ENCODE measurements at regions of chr2 and their contacts with region 1.

Region 1: DNA sequence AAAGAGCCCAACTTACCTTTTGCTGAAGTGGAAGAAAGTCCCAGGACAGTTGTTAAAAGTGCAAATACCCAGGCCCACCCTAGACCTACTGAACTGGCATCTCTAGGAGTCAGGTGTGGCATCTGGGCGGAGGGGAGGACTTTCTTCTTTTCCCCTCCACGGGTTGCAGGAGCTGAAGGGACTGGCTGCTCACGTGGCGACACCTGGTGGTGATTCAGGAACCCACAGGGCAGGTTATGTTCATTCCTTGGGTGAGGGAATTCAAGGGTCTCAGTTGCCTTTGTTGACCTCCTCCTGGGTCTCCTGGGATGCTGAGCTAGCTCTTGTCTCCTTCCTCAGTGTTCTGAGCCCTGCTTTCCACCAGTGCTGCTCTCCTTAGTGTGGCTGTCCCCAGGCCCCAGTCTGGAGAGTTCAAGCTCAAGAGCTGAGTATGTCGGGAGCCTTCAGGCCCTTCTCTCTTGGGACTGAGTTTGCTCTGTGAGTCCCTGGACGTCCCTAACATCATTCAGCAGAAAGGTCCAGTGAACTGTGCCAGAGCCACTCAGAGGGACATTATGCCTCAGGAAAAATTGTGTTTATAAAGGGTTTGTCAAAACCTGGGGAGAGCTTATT is 56.9 kb downstream of the DYSF start:
- DNase-seq: peak; percentile 72 to 78
- H3K4me3 ChIP-seq: no peak overlapping the region
- H3K27ac ChIP-seq: no peak overlapping the region
- H3K4me1 ChIP-seq: peaks cover 0 to 5% of the 10 kb centered on the region in 2 donors
- H3K27me3 ChIP-seq: no peaks in the 10 kb centered on the region
- CTCF ChIP-seq: peak; percentile 81 to 92 (median 84)
- POLR2A ChIP-seq: no peak

Region 2: DNA sequence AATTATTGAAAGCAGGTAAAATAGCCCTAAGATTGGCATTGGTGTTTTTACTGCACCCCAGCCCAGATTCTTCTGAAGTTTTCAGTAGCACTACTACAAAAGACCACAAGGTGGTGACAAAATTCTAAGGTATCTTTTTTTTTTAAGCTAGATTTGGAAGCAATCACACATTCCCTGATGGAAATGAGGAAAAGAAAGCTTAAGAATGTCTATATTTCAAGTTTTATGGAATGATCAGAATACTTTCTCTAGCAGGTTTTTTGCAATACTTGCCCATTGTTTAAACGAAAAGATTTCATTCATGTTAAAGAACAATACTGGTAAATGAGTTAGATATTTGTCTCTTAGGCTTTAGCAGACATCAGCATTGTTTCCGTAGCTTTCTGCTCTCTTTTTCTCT is 210.8 kb before region 1 on chr2:
- intact Hi-C with region 1: loop called (anchors 2 kb)
- DNase-seq: no peak
- H3K4me3 ChIP-seq: no peak overlapping the region
- H3K27ac ChIP-seq: no peak overlapping the region
- H3K4me1 ChIP-seq: no peaks in the 10 kb centered on the region
- H3K27me3 ChIP-seq: no peaks in the 10 kb centered on the region
- CTCF ChIP-seq: peak; percentile 45 to 73 (median 62)
- POLR2A ChIP-seq: no peak

Region 3: GRCh38 chr2:71463342-71463654 is 47.0 kb before region 1 on chr2:
- intact Hi-C with region 1: loop called (anchors 2 kb)
- DNase-seq: no peak
- H3K4me3 ChIP-seq: no peak overlapping the region
- H3K27ac ChIP-seq: no peak overlapping the region
- H3K4me1 ChIP-seq: peaks cover 3 to 12% of the 10 kb centered on the region in 2 donors
- H3K27me3 ChIP-seq: no peaks in the 10 kb centered on the region
- CTCF ChIP-seq: no peak
- POLR2A ChIP-seq: no peak